ENCODE measurements at regions of chr5 and their contacts with region 1.

Region 1: GRCh38 chr5:173573126-173573960 is 43.1 kb downstream of the BOD1 start:
- DNase-seq: peak; percentile 84
- H3K4me3 ChIP-seq: no peak overlapping the region
- H3K27ac ChIP-seq: peak overlapping the region in 1 of 4 donors; percentile 20
- H3K4me1 ChIP-seq: peaks cover 0 to 20% (median 10%) of the 10 kb centered on the region in 4 donors
- H3K27me3 ChIP-seq: no peaks in the 10 kb centered on the region
- CTCF ChIP-seq: peak; percentile 86 to 98 (median 90)
- EP300 ChIP-seq: no peak
- POLR2A ChIP-seq: no peak

Region 2: GRCh38 chr5:173256800-173257199 is 316.5 kb before region 1 on chr5:
- intact Hi-C with region 1: no loop called
- DNase-seq: no peak
- H3K4me3 ChIP-seq: no peak overlapping the region
- H3K27ac ChIP-seq: no peak overlapping the region
- H3K4me1 ChIP-seq: no peaks in the 10 kb centered on the region
- H3K27me3 ChIP-seq: peaks cover 0 to 50% (median 8%) of the 10 kb centered on the region in 3 donors
- CTCF ChIP-seq: no peak
- EP300 ChIP-seq: no peak
- POLR2A ChIP-seq: no peak

Region 3: GRCh38 chr5:173293817-173294672 is 279.3 kb before region 1 on chr5:
- intact Hi-C with region 1: loop called (anchors 1 kb)
- DNase-seq: peak; percentile 81
- H3K4me3 ChIP-seq: peak overlapping the region in 1 of 4 donors; percentile 21
- H3K27ac ChIP-seq: no peak overlapping the region
- H3K4me1 ChIP-seq: peaks cover 0 to 25% (median 24%) of the 10 kb centered on the region in 4 donors
- H3K27me3 ChIP-seq: no peaks in the 10 kb centered on the region
- CTCF ChIP-seq: peak; percentile 86 to 95 (median 92)
- EP300 ChIP-seq: no peak
- POLR2A ChIP-seq: no peak

Region 4: DNA sequence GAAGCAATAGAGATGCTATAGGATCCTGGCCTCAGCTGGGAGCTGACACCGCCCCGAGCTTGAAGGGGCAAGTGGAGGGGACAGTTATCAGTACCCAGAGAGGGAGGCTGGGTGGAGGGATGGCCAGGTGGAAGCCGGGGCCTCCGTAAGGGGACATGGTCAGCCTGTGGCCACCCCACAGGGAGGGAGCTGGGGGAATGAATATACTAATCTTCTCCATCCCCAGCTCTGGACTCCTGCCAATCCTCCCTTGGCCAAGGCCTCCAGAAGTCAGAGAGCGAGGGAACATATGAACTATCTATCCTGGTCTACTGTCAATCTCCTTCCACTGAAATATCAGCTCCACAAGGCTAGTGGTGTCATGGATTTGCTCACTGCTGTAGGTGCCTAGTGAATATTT is 66.2 kb before region 1 on chr5:
- intact Hi-C with region 1: no loop called
- DNase-seq: no peak
- H3K4me3 ChIP-seq: no peak overlapping the region
- H3K27ac ChIP-seq: no peak overlapping the region
- H3K4me1 ChIP-seq: no peaks in the 10 kb centered on the region
- H3K27me3 ChIP-seq: no peaks in the 10 kb centered on the region
- CTCF ChIP-seq: no peak
- EP300 ChIP-seq: no peak
- POLR2A ChIP-seq: no peak

Measured in sigmoid colon (tissue), 7 donors.